Right ventricle myocardium inferior (tissue), 1 donor: ENCODE measurements at regions of chr3 and their contacts with region 1.

Region 1: GRCh38 chr3:194879991-194880939 is 194.6 kb downstream of the FAM43A start:
- DNase-seq: peak; percentile 81
- ATAC-seq: peak; percentile 80

Region 2: DNA sequence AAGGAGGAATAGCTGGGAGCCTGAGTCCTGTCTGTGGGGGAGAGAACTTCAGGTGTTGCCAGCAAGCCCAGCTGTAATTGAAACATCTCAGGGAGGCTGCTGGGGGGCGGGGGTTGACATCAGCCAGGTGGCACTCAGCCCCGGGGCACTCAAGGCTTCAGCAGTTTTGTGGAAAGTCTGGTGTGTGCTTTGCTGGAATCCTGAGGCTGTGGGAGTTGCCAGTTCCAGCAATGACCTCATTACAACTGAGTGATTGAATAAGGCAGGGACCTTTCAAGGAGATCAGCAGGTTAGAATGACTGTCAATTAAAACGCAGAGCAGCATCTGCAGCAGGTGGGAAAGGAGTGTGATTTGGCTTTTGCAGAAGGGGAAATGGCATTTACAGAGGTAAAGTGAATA is 118.9 kb before region 1 on chr3:
- intact Hi-C with region 1: no loop called
- DNase-seq: no peak
- ATAC-seq: peak; percentile 68

Region 3: GRCh38 chr3:194930377-194931204 is 50.3 kb after region 1 on chr3:
- intact Hi-C with region 1: loop called (anchors 5 kb)
- DNase-seq: no peak
- ATAC-seq: peak; percentile 78

Region 4: GRCh38 chr3:194956697-194957396 is 76.6 kb after region 1 on chr3:
- intact Hi-C with region 1: no loop called
- DNase-seq: no peak
- ATAC-seq: peak; percentile 45

Region 5: DNA sequence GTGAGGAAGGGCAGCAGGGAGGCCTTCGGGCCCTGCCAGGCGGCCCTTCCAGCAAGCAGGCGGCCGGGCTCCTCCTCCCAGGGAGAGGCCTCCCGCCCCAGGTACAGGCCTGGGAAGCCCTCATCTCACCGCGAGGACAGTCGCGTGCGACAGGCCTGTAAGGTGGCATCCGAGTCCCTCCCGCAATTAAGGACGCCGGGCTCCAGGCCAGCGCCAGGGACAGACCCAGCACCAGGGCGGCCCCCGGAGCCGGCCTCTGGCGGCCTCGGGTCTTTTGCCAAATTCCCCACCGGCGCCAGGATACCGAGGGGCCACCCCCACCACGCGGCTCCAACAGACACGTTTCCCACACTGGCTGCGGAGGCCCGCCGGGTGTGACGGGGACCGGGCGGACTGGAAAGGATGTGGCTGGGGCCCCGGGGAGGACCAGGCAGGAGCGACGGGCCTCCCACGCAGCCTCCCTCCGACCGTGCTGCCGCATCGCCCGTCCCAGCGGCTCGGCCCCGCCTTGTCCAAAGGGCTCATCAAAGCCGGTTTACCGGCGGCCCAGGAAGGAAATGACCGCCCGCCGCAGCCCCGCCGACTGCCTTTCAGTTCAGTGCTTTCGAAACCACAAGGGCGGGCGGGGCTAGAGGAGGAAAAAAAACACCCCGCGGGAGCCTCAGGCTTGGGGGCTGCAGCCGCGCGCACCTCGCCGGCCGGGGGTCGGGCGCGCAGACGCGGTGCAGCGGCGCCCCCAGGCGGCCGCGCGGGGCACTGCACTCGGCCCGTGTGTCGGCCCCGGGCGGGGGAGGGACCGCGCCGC is 379.4 kb after region 1 on chr3:
- intact Hi-C with region 1: loop called (anchors 5 kb)
- DNase-seq: peak; percentile 94
- ATAC-seq: peak; percentile 89